Breast epithelium (tissue), 4 donors: ENCODE measurements at regions of chr1 and their contacts with region 1.

Region 1: GRCh38 chr1:213568929-213569815 is 418.6 kb upstream of the PROX1 start:
- DNase-seq: no peak
- H3K4me3 ChIP-seq: no peak overlapping the region
- H3K27ac ChIP-seq: no peak overlapping the region
- H3K4me1 ChIP-seq: no peaks in the 10 kb centered on the region
- H3K27me3 ChIP-seq: no peaks in the 10 kb centered on the region
- CTCF ChIP-seq: no peak
- POLR2A ChIP-seq: no peak

Region 2: DNA sequence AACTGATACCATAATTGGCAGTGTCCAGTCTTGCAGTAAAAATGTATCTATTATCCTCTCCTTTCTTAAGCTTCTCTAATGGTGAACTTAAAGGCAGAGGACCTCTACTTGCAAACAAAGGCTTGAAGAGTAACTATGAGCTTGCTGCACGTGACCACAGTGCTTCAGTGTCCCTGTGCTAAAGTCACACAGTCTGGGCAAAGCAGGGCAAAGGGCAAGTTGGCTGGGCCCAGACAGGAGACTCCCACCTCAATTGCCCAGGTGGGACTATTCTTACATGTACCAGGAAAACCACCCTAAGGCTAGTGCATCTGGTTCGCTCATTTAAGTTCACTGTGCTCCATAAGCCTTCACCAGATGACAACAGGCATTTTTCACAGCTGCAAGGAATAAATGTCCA is 44.4 kb after region 1 on chr1:
- intact Hi-C with region 1: loop called (anchors 5 kb)
- DNase-seq: no peak
- H3K4me3 ChIP-seq: no peak overlapping the region
- H3K27ac ChIP-seq: no peak overlapping the region
- H3K4me1 ChIP-seq: no peaks in the 10 kb centered on the region
- H3K27me3 ChIP-seq: no peaks in the 10 kb centered on the region
- CTCF ChIP-seq: no peak
- POLR2A ChIP-seq: no peak

Region 3: DNA sequence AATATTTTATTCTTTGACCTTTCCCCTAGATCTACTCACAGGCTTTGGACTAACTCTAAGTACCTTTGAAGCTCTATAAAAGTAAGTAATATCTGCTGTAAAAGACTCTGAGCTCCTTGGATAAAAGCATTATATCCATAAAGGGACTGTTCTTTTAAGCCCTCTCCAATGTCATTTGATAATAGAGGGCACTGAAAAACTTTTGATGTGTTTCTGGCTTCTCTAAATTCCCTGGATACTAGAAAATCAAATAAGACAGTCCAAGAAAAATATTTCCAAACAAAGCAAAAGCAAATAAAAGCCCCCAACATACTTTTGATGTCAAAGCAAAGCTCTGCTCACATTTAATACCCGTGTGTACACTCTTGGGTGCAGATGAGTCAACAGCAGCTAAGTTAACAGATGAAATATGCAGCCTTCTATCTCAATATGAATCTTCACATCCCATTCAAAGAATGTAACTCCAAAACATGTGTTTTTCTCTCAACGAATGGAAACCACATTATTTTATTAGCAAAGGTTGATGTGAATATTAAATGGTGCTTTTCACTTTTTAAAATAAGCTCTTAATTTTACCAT is 1264.1 kb after region 1 on chr1:
- intact Hi-C with region 1: no loop called
- DNase-seq: no peak
- H3K4me3 ChIP-seq: no peak overlapping the region
- H3K27ac ChIP-seq: no peak overlapping the region
- H3K4me1 ChIP-seq: no peaks in the 10 kb centered on the region
- H3K27me3 ChIP-seq: no peaks in the 10 kb centered on the region
- CTCF ChIP-seq: no peak
- POLR2A ChIP-seq: no peak